Panc1 (cell line): ENCODE measurements at regions of chr12 and their contacts with region 1.

Region 1: DNA sequence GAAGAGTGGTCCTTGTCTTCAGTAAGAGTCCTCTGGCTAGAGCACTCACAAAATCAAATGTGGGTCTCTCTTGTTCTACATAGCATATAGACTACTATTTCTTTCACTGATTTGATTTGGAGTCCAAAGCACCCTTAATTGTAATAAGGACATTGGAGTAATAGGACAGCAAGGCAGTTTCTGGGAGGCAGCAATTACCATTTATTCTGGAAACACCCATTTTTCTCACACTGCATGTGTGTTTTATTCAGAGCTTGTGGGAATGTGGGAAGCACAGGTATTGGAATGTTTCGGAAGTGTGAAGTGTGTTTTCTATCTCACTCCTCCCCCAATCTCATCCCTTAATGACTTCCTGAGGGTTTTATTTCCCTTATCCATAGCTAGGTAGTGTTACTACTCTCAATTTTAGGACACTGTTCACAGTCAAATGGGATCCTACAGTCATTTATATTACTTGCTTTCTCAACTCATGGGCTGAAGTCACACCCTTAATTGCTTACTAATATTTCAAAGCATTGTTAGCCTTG is 20.2 kb downstream of the PCBP2 start:
- DNase-seq: no peak
- ATAC-seq: no peak
- H3K4me3 ChIP-seq: no peak overlapping the region
- H3K27ac ChIP-seq: no peak overlapping the region
- H3K4me1 ChIP-seq: peaks cover 7% of the 10 kb centered on the region; the same call in 1 of the 2 replicates
- H3K27me3 ChIP-seq: no peaks in the 10 kb centered on the region
- CTCF ChIP-seq: no peak

Region 2: DNA sequence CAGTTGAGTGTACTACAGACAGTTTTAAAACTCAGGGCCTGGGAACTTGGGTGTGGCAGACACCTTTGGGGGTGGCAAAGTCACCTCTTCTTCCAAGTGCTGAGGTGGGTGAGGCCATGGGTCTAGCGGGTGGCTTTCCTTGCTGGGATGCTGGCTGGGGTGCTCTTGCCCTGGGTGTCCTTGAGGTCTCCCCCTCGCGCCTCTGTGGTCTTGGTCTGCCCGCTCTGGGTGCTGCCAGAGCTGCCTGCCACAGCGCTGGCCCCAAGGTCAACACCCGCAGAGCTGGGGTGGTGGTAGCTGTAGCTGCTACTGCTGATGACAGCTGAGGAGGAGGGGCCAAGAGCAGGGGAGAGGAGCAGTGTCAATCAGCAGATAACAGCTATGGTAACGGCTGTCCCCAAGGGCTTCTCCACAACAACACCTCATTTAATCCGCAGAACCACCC is 905.2 kb before region 1 on chr12:
- CTCF ChIA-PET with region 1: no interaction called
- POLR2A ChIA-PET with region 1: no interaction called
- in situ Hi-C with region 1: no loop called
- intact Hi-C with region 1: no loop called
- DNase-seq: no peak
- ATAC-seq: no peak
- H3K4me3 ChIP-seq: no peak overlapping the region
- H3K27ac ChIP-seq: no peak overlapping the region
- H3K4me1 ChIP-seq: no peaks in the 10 kb centered on the region
- H3K27me3 ChIP-seq: peaks cover 26% of the 10 kb centered on the region
- CTCF ChIP-seq: no peak

Region 3: DNA sequence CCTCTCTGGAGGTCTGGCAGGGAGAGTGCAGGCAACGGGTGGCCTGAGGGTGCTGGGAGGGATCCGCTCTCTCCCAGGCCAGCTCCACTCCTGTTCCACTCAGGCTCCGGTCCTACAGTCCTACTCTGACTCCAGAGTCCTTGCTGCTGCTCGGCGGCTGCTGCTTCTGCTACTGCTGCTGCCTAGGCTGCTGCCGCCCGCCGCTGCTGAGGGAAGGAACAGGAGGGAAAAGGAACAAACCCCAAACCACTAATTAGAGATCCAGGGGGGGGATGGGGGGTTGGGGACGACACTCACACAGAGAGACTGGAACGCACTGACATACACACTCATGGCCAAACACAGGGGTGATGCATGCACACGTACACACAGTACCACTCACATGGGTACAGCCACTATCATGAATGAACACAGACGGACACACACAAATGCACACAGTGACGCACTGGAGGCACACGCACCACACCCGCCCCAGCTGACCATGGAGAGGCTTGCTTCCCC is 135.9 kb before region 1 on chr12 and contains the start of gene SP7:
- CTCF ChIA-PET with region 1: no interaction called
- POLR2A ChIA-PET with region 1: no interaction called
- in situ Hi-C with region 1: no loop called
- intact Hi-C with region 1: no loop called
- DNase-seq: no peak
- ATAC-seq: peak; percentile 60
- H3K4me3 ChIP-seq: no peak within 1 kb of the TSS
- H3K27ac ChIP-seq: no peak within 1 kb of the TSS
- H3K4me1 ChIP-seq: no peaks in the 10 kb centered on the region
- H3K27me3 ChIP-seq: no peaks in the 10 kb centered on the region
- CTCF ChIP-seq: no peak
- total RNA-seq, gene SP7: not detected

Region 4: GRCh38 chr12:53625946-53626701 is 154.0 kb after region 1 on chr12 and contains the start of gene ATF7:
- CTCF ChIA-PET with region 1: interaction called, 12 read pairs
- POLR2A ChIA-PET with region 1: no interaction called
- in situ Hi-C with region 1: no loop called
- intact Hi-C with region 1: no loop called
- DNase-seq: peak; percentile 96
- ATAC-seq: peak; percentile 98
- H3K4me3 ChIP-seq: peak within 1 kb of the TSS; percentile 78 to 96
- H3K27ac ChIP-seq: peak within 1 kb of the TSS; percentile 99
- H3K4me1 ChIP-seq: peaks cover 28% of the 10 kb centered on the region
- H3K27me3 ChIP-seq: no peaks in the 10 kb centered on the region
- CTCF ChIP-seq: no peak
- total RNA-seq, gene ATF7: 29.5 TPM